ENCODE measurements at regions of chr7 and their contacts with region 1.

Region 1: DNA sequence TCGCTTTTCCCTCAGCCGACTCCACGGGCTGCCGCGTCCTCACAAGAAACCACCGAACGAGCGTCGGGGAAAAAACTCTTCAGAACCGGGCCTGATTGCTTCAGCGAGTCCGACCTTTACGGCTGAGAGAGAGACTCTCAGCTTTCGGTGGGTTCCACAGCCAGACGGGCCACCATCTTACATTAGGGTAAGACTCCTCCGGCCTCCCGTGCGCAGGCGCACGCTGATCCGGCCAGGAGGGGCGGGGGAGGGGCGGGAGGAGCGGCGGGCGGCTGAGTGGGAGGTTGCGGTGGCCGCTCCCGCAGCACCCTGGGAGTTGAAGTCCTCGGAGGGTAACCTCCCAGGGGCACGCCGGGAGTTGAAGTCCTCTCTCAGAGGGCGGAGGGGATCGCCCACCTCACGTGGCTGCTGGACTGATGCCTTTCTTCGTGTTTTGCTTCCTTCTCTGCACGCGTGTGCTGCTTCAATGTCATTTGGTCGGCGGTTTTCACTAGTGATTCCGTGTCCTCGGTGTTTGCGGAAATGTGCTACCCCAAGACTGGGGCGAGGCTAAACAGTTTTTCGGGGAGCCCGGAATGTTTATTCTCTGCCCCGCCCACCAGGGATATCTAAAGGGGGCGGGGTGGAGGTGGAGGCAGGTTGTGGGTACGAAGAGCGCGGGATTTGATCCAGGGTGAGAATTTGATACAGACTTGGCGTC is at the start of gene CNOT4:
- DNase-seq: peak; percentile 95
- H3K4me3 Mint-ChIP-seq: no peak within 1 kb of the TSS
- H3K27ac Mint-ChIP-seq: no peak within 1 kb of the TSS
- H3K4me1 Mint-ChIP-seq: peaks cover 17% of the 10 kb centered on the region
- H3K27me3 Mint-ChIP-seq: no peaks in the 10 kb centered on the region
- CTCF ChIP-seq: no peak
- total RNA-seq, gene CNOT4: 18.5 and 19.6 TPM in 2 replicates

Region 2: DNA sequence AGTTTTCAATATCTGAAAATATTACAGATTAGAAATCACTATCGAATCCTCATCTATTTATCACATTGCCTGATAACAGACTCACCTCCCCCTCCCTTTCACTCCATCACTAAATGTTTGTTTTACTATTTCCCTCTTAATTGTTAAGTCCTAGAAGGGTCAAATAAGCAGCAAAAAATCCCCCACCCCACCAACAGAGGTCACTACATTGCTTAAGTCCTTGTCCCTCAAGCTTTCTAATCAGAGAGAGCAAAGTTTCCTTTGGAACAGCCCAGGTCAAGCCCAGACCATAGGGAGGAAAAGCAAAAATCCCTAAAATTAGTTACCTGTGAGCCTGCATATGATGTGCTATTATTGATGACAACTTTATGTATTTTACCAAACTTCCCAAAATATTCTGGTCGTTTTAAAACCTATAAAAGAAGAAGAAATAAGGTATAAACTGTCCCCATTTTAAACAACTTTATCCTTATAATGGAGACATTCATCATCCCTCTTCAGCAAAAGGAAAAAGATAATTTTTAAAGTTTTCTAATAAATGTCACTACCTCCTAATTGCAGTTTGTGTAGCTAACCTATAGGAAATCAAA is 95.1 kb before region 1 on chr7:
- CTCF ChIA-PET with region 1: interaction called, 5 read pairs
- POLR2A ChIA-PET with region 1: no interaction called
- intact Hi-C with region 1: loop called (anchors 1 kb)
- DNase-seq: peak; percentile 63
- H3K4me3 Mint-ChIP-seq: no peak overlapping the region
- H3K27ac Mint-ChIP-seq: no peak overlapping the region
- H3K4me1 Mint-ChIP-seq: peaks cover 11% of the 10 kb centered on the region
- H3K27me3 Mint-ChIP-seq: no peaks in the 10 kb centered on the region
- CTCF ChIP-seq: peak; percentile 50

Region 3: GRCh38 chr7:135441791-135442190 is 68.3 kb before region 1 on chr7:
- CTCF ChIA-PET with region 1: no interaction called
- POLR2A ChIA-PET with region 1: no interaction called
- intact Hi-C with region 1: loop called (anchors 5 kb)
- DNase-seq: peak; percentile 74
- H3K4me3 Mint-ChIP-seq: no peak overlapping the region
- H3K27ac Mint-ChIP-seq: no peak overlapping the region
- H3K4me1 Mint-ChIP-seq: peaks cover 6% of the 10 kb centered on the region
- H3K27me3 Mint-ChIP-seq: no peaks in the 10 kb centered on the region
- CTCF ChIP-seq: no peak

Region 4: GRCh38 chr7:135558337-135558767 is 48.3 kb after region 1 on chr7:
- CTCF ChIA-PET with region 1: interaction called, 5 read pairs
- POLR2A ChIA-PET with region 1: interaction called, 6 read pairs
- intact Hi-C with region 1: loop called (anchors 1 kb)
- DNase-seq: peak; percentile 85
- H3K4me3 Mint-ChIP-seq: no peak overlapping the region
- H3K27ac Mint-ChIP-seq: no peak overlapping the region
- H3K4me1 Mint-ChIP-seq: peaks cover 9% of the 10 kb centered on the region
- H3K27me3 Mint-ChIP-seq: no peaks in the 10 kb centered on the region
- CTCF ChIP-seq: peak; percentile 41

Region 5: GRCh38 chr7:135645296-135645904 is 135.3 kb after region 1 on chr7:
- CTCF ChIA-PET with region 1: interaction called, 7 read pairs
- POLR2A ChIA-PET with region 1: no interaction called
- intact Hi-C with region 1: loop called (anchors 2 kb)
- DNase-seq: peak; percentile 57
- H3K4me3 Mint-ChIP-seq: no peak overlapping the region
- H3K27ac Mint-ChIP-seq: no peak overlapping the region
- H3K4me1 Mint-ChIP-seq: no peaks in the 10 kb centered on the region
- H3K27me3 Mint-ChIP-seq: no peaks in the 10 kb centered on the region
- CTCF ChIP-seq: peak; percentile 46

Region 6: DNA sequence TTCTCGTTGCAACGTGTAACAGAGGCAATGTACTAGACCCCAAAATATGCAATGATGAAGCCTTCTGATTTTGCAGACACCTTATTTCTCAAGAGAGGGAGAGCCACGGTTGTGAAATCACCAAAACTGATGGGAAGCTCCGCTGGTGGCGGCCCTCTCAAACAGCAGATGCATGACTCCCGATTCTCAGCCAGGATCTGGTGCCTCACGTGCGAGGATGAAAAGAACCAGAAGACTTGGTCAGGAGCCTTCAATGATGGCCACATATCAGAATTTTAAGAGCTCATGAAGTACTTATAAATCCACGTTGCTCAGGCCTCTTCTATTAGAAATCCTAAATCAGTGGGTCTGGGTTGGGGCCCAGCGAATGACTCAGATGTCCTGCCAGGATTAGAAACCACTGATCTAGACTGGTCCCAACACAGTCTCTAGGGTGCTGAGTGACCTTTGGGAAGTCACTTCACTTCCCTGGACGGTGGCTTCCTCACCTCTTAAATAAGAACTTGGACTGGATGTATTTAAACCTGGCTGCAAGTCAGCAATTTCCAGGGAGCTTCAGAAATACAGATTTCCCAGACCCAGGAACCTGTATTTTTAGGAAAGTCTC is 280.4 kb after region 1 on chr7:
- CTCF ChIA-PET with region 1: no interaction called
- POLR2A ChIA-PET with region 1: no interaction called
- intact Hi-C with region 1: no loop called
- DNase-seq: no peak
- H3K4me3 Mint-ChIP-seq: no peak overlapping the region
- H3K27ac Mint-ChIP-seq: no peak overlapping the region
- H3K4me1 Mint-ChIP-seq: no peaks in the 10 kb centered on the region
- H3K27me3 Mint-ChIP-seq: peaks cover 2% of the 10 kb centered on the region
- CTCF ChIP-seq: no peak

Region 7: DNA sequence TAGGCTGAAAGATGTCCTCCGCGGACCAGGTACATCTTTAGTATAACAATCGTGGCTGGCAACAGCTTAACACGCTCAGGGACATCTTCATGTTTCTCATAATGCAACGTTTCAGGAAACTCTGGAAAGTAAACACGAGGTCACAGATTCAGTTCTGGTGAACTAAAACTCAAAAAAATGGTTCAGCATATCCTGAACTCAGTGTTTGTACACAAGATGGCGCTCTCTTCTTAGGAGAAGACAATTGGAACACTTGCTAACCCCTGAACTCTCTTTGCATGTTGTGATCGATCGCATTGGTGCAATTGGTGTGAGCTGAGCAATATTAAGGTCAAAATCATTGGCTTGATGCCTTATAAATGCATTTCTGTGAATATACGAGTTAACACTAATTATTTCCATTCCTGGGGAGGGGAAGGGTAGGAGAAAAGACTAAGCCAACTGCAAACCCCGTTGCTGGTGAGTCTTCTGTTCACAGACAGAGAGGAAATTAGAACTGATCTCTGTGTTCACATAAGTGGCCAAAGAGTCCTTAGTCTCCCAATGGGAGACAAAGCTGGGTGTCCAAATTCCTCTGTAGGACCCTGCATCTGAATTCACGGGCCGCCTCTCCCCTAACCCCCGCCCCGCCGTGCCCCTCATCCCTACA is 291.1 kb after region 1 on chr7:
- CTCF ChIA-PET with region 1: no interaction called
- POLR2A ChIA-PET with region 1: no interaction called
- intact Hi-C with region 1: no loop called
- DNase-seq: peak; percentile 71
- H3K4me3 Mint-ChIP-seq: no peak overlapping the region
- H3K27ac Mint-ChIP-seq: no peak overlapping the region
- H3K4me1 Mint-ChIP-seq: peaks cover 15% of the 10 kb centered on the region
- H3K27me3 Mint-ChIP-seq: no peaks in the 10 kb centered on the region
- CTCF ChIP-seq: peak; percentile 76

Measured in MCF 10A (cell line).